GM23248 (cell line): ENCODE measurements at regions of chr18 and their contacts with region 1.

Region 1: GRCh38 chr18:7177116-7177744 is 53.7 kb upstream of the LRRC30 start:
- DNase-seq: peak; percentile 86
- H3K4me3 ChIP-seq: no peak overlapping the region
- H3K27ac ChIP-seq: no peak overlapping the region
- H3K4me1 ChIP-seq: no peaks in the 10 kb centered on the region
- H3K27me3 ChIP-seq: peaks cover 6% of the 10 kb centered on the region

Region 2: GRCh38 chr18:6561420-6561861 is 615.8 kb before region 1 on chr18:
- in situ Hi-C with region 1: loop called (anchors 25 kb)
- DNase-seq: no peak
- H3K4me3 ChIP-seq: no peak overlapping the region
- H3K27ac ChIP-seq: no peak overlapping the region
- H3K4me1 ChIP-seq: no peaks in the 10 kb centered on the region
- H3K27me3 ChIP-seq: peaks cover 22% of the 10 kb centered on the region

Region 3: GRCh38 chr18:6920099-6920899 is 256.9 kb before region 1 on chr18:
- in situ Hi-C with region 1: loop called (anchors 10 kb)
- DNase-seq: peak; percentile 74
- H3K4me3 ChIP-seq: no peak overlapping the region
- H3K27ac ChIP-seq: no peak overlapping the region
- H3K4me1 ChIP-seq: no peaks in the 10 kb centered on the region
- H3K27me3 ChIP-seq: no peaks in the 10 kb centered on the region

Region 4: GRCh38 chr18:7038330-7038851 is 138.8 kb before region 1 on chr18:
- in situ Hi-C with region 1: loop called (anchors 10 kb)
- DNase-seq: peak; percentile 100
- H3K4me3 ChIP-seq: peak overlapping the region; percentile 52
- H3K27ac ChIP-seq: peak overlapping the region; percentile 82
- H3K4me1 ChIP-seq: peaks cover 23% of the 10 kb centered on the region
- H3K27me3 ChIP-seq: no peaks in the 10 kb centered on the region

Region 5: DNA sequence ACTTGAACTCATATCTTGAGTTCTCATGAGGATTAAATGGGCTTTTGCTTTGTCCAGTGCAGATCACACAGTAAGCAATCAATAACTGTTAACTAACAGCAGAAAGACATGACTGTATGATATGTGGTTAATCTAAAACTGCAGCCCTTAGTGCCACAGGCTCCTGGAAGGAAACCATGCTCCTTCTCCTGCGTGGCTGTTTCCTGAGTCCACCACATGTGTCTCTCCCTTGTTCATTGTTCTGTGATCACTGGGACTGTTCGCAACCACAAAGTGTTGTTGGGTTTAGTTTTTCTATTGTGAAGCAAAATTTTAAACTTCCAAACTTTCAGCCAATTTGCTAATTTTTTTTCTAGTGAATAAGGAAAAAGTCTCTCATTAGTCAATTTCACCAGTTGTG is 258.9 kb after region 1 on chr18:
- in situ Hi-C with region 1: no loop called
- DNase-seq: no peak
- H3K4me3 ChIP-seq: no peak overlapping the region
- H3K27ac ChIP-seq: no peak overlapping the region
- H3K4me1 ChIP-seq: no peaks in the 10 kb centered on the region
- H3K27me3 ChIP-seq: 0 out of 2 replicates have a peak, but pooled peaks cover 4% of the 10 kb centered on the region